ENCODE measurements at regions of chr3 and their contacts with region 1.

Region 1: DNA sequence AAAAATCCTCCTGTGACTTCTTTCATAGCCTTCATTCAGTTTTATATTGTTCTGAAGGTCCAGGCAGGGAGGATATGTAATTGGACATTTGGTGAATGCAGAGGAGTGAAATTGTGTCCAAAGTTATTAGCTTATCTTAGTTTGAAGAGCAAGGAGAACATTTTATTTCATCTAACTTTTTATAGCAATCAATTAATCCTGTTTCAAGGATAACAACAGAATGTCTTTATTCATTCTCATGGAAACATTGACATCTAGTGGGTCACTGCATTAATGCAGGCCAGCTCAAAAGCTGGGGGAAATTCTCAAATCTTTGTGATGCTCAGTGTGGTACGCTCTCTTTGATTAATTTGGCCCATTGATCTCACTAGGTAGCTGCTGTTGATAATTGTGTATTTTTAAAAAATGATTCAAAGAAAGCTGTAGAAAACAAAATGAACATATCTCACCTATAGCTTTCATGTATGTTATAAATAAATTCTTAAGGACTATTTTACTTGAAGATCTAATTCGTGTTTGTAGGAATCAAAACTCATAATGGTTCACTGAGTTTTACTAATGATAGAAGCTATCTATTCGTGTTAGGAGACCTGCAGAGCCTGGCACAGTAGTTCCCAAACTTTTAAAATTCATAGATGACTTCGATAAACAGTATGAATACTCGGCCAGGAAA is 150.8 kb upstream of the KCNMB2 start:
- DNase-seq: peak in 1 of 2 experiments; percentile 31
- H3K4me3 ChIP-seq: no peak overlapping the region
- H3K27ac ChIP-seq: no peak overlapping the region
- H3K4me1 ChIP-seq: peaks cover 26% of the 10 kb centered on the region
- H3K27me3 ChIP-seq: no peaks in the 10 kb centered on the region
- CTCF ChIP-seq: peak; percentile 98

Region 2: GRCh38 chr3:176939022-176939817 is 1446.2 kb before region 1 on chr3:
- CTCF ChIA-PET with region 1: no interaction called
- POLR2A ChIA-PET with region 1: no interaction called
- intact Hi-C with region 1: loop called (anchors 10 kb)
- DNase-seq: peak; percentile 47 to 76
- H3K4me3 ChIP-seq: no peak overlapping the region
- H3K27ac ChIP-seq: no peak overlapping the region
- H3K4me1 ChIP-seq: no peaks in the 10 kb centered on the region; the same call in 1 of the 2 replicates
- H3K27me3 ChIP-seq: no peaks in the 10 kb centered on the region
- CTCF ChIP-seq: peak; percentile 98

Region 3: DNA sequence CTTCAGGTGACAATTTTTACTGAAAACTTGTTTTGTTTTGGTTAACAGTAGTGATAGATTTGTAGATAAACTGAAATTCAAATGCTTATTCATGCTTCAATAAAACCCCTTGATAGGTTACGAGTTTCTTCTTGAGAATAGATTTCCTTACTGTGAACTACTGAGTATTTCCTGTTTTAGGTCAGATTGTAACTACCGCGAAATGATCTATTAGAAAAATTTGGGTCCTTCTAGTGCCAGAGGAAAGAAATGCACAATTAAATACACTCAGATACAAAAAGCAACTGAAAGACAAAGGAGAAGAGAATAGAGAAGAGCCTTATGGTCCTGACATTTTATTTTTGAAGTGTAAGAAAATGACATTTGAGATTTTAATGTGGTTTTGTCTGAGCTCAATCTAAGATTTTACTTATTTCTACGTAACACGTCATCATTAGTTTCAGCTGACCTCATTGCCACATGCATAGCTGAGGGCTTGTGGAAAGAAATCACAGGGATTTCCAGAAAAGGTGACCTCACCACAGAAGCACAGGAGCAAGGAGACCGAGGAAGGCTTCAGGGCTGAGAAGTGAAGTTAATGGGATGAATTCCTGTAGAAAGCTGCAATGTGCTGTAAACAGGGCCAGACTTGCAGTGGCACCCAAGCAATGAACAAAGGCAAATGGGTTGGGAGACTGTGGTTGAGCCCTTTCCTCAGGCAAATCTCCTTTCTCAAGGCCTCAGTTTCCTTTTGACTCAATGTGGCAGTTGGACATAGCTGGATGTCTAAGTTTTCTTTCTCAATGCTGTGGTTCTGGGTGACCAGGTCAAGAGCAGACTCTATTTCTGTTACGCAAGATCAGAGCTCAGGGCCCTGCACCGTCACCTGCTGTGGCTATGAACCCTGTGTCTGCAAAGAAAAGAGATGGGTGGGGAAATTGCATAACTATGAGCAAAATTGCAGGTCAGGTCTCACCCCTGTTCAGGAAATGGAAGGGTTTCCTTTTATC is 936.1 kb before region 1 on chr3:
- CTCF ChIA-PET with region 1: no interaction called
- POLR2A ChIA-PET with region 1: no interaction called
- intact Hi-C with region 1: loop called (anchors 1 kb)
- DNase-seq: peak; percentile 82 to 99
- H3K4me3 ChIP-seq: peak overlapping the region; percentile 9; the same call in 1 of the 2 replicates
- H3K27ac ChIP-seq: peak overlapping the region; percentile 89
- H3K4me1 ChIP-seq: peaks cover 66% of the 10 kb centered on the region
- H3K27me3 ChIP-seq: no peaks in the 10 kb centered on the region
- CTCF ChIP-seq: no peak

Region 4: DNA sequence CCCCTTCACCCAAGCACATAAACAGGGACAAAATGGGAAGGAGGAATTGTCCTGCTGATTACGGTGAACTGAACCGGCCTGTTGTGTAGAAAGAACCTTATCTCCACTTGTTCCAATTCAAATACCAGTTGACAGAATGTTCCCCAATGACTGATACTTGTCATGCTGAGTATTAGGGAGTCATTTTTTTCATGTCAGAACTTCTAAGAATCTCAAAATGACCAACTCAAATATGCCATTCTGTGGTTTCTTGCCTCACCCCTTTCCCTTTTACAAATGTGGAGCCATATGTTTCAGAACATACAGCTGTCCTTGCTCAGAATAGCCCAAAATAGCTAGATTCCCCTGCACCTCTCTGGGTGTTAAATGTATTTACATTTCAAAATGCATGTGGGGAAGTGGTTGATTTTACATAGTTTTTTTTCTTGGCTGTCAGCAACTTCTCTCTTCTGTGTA is 782.2 kb before region 1 on chr3:
- CTCF ChIA-PET with region 1: no interaction called
- POLR2A ChIA-PET with region 1: no interaction called
- intact Hi-C with region 1: loop called (anchors 5 kb)
- DNase-seq: no peak
- H3K4me3 ChIP-seq: peak overlapping the region; percentile 9; the same call in 1 of the 2 replicates
- H3K27ac ChIP-seq: peak overlapping the region; percentile 89
- H3K4me1 ChIP-seq: peaks cover 61% of the 10 kb centered on the region
- H3K27me3 ChIP-seq: no peaks in the 10 kb centered on the region
- CTCF ChIP-seq: no peak

Region 5: GRCh38 chr3:177942911-177943310 is 442.5 kb before region 1 on chr3:
- CTCF ChIA-PET with region 1: no interaction called
- POLR2A ChIA-PET with region 1: interaction called, 11 read pairs
- intact Hi-C with region 1: no loop called
- DNase-seq: no peak
- H3K4me3 ChIP-seq: no peak overlapping the region
- H3K27ac ChIP-seq: no peak overlapping the region
- H3K4me1 ChIP-seq: 0 out of 2 replicates have a peak, but pooled peaks cover 8% of the 10 kb centered on the region
- H3K27me3 ChIP-seq: no peaks in the 10 kb centered on the region
- CTCF ChIP-seq: no peak

Measured in PC-9 (cell line).